ENCODE measurements at regions of chr7 and their contacts with region 1.

Region 1: DNA sequence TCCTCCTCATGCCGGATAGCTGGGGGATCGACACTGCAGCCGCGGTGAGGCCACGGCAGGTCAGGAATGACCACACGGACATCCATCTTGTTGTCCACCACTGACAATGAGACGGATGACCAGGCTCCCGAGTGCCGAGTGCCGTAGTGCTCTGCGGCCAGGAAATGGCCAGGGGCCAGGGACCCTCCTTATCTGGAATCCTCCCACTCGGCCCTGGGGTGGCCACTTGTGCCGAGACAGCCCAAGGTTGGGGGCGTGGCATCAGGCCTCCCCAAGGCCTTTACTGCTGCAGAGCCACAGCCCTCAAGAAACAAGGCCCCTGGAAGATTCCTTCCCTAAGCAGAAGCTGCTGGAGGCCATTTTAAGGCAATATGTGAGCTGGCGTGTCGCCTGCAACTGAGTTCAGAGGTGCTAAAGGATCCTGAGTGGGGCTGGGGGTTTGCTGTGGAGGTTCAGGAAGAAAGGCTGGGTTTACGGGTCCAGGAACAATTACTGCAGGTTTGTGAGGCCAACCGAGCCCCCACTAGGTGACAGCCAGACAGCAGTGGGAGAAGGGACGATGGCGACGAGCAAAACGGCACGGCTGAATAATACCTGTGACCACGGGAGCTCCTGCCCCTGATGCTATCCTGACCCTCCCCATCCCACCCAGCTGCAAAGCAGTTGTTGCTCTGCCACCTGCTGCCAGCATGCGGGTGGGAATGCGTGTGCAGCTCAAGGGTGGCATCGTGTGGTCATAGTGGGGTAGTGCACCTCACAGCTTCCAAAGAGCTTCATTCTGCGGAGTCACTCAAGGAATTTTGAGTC is 31.6 kb upstream of the LEP start:
- DNase-seq: peak; percentile 80
- H3K4me3 Mint-ChIP-seq: no peak overlapping the region
- H3K27ac Mint-ChIP-seq: no peak overlapping the region
- H3K4me1 Mint-ChIP-seq: peaks cover 4% of the 10 kb centered on the region
- H3K27me3 Mint-ChIP-seq: no peaks in the 10 kb centered on the region
- CTCF ChIP-seq: peak; percentile 99

Region 2: GRCh38 chr7:127708788-127709187 is 500.6 kb before region 1 on chr7:
- CTCF ChIA-PET with region 1: interaction called, 239 read pairs
- POLR2A ChIA-PET with region 1: interaction called, 5 read pairs
- intact Hi-C with region 1: loop called (anchors 1 kb)
- DNase-seq: peak; percentile 80
- H3K4me3 Mint-ChIP-seq: no peak overlapping the region
- H3K27ac Mint-ChIP-seq: no peak overlapping the region
- H3K4me1 Mint-ChIP-seq: peaks cover 9% of the 10 kb centered on the region
- H3K27me3 Mint-ChIP-seq: no peaks in the 10 kb centered on the region
- CTCF ChIP-seq: peak; percentile 75

Region 3: GRCh38 chr7:127733986-127734385 is 475.4 kb before region 1 on chr7:
- CTCF ChIA-PET with region 1: interaction called, 11 read pairs
- POLR2A ChIA-PET with region 1: no interaction called
- intact Hi-C with region 1: no loop called
- DNase-seq: no peak
- H3K4me3 Mint-ChIP-seq: no peak overlapping the region
- H3K27ac Mint-ChIP-seq: no peak overlapping the region
- H3K4me1 Mint-ChIP-seq: no peaks in the 10 kb centered on the region
- H3K27me3 Mint-ChIP-seq: no peaks in the 10 kb centered on the region
- CTCF ChIP-seq: no peak

Region 4: GRCh38 chr7:128027485-128027980 is 181.9 kb before region 1 on chr7:
- CTCF ChIA-PET with region 1: interaction called, 14 read pairs
- POLR2A ChIA-PET with region 1: no interaction called
- intact Hi-C with region 1: no loop called
- DNase-seq: no peak
- H3K4me3 Mint-ChIP-seq: no peak overlapping the region
- H3K27ac Mint-ChIP-seq: peak overlapping the region; percentile 46
- H3K4me1 Mint-ChIP-seq: peaks cover 31% of the 10 kb centered on the region
- H3K27me3 Mint-ChIP-seq: no peaks in the 10 kb centered on the region
- CTCF ChIP-seq: no peak

Region 5: GRCh38 chr7:128129224-128129864 is 80.1 kb before region 1 on chr7:
- CTCF ChIA-PET with region 1: interaction called, 188 read pairs
- POLR2A ChIA-PET with region 1: no interaction called
- intact Hi-C with region 1: no loop called
- DNase-seq: no peak
- H3K4me3 Mint-ChIP-seq: no peak overlapping the region
- H3K27ac Mint-ChIP-seq: no peak overlapping the region
- H3K4me1 Mint-ChIP-seq: no peaks in the 10 kb centered on the region
- H3K27me3 Mint-ChIP-seq: peaks cover 9% of the 10 kb centered on the region
- CTCF ChIP-seq: no peak

Region 6: GRCh38 chr7:128164061-128164954 is 45.1 kb before region 1 on chr7:
- CTCF ChIA-PET with region 1: interaction called, 23 read pairs
- POLR2A ChIA-PET with region 1: no interaction called
- intact Hi-C with region 1: no loop called
- DNase-seq: peak; percentile 91
- H3K4me3 Mint-ChIP-seq: no peak overlapping the region
- H3K27ac Mint-ChIP-seq: peak overlapping the region; percentile 46
- H3K4me1 Mint-ChIP-seq: peaks cover 18% of the 10 kb centered on the region
- H3K27me3 Mint-ChIP-seq: peaks cover 12% of the 10 kb centered on the region
- CTCF ChIP-seq: no peak

Region 7: DNA sequence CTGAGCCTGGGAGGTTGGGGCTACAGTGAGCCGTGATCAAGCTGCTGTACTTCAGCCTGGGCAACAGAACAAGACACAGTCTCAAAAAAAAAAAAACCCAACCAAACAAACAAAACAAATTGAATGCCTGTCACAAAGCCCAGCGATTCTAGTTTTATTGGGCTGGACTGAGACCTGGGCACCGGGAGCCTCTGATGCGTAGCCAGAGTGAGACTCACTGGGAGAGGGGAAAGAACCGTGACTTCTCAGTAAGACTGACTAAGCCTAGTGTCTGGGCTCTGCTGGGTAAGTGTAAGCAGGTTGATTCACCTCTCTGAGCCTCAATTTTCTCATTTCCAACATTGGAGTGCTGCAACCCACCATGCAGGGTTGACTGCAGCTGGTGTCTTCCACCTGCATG is 21.6 kb after region 1 on chr7:
- CTCF ChIA-PET with region 1: interaction called, 25 read pairs
- POLR2A ChIA-PET with region 1: no interaction called
- intact Hi-C with region 1: no loop called
- DNase-seq: no peak
- H3K4me3 Mint-ChIP-seq: no peak overlapping the region
- H3K27ac Mint-ChIP-seq: no peak overlapping the region
- H3K4me1 Mint-ChIP-seq: peaks cover 5% of the 10 kb centered on the region
- H3K27me3 Mint-ChIP-seq: no peaks in the 10 kb centered on the region
- CTCF ChIP-seq: no peak